Mammary epithelial cell (primary cell): ENCODE measurements at regions of chr2 and their contacts with region 1.

Region 1: DNA sequence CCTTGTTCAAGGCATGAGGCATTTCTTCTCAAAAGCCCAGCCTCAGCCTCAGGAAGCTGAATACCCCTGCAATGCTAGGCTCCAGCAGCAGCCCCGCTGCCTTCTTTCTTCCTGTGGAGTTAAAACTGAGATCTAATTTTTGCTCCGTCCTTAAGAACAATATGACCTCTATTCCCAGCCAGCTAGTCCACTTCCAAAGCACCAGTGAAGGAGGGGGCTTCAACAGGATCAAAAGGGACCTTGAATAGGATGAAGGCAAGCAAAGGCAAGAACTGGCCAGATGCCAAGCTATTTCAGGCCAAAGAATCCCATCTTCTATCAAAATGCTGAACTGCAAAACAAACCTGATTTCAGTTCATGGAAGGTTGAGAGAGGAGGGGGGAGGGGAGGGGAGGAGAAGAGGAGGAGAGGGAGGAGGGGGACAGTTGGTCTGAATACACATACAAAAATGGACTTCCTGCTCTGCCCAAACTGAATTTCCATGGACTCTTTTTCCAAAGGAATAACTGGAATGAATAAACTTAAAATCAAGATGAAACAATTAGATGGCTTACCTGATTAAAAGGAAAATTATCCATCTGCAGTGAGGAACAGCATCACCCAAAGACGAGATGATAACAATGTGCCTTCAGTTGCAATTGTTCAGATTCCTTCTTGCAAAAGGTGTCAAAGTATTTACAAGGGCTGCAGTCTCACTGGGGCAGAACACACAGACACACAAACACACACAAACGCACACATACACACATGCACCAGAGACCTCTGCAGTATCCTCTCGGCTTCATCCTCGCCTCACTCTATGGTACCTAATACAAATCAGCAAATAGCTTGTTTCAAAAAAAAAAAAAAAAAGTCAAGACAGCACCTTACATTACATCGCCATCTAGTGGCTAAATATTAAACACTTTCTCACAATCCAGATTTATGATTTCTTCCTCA is at the start of gene SCN1A:
- DNase-seq: peak; percentile 9
- H3K4me3 ChIP-seq: no peak within 1 kb of the TSS
- H3K27ac ChIP-seq: no peak within 1 kb of the TSS
- H3K4me1 ChIP-seq: peaks cover 7% of the 10 kb centered on the region
- H3K27me3 ChIP-seq: no peaks in the 10 kb centered on the region
- CTCF ChIP-seq: peak; percentile 40 to 55
- total RNA-seq, gene SCN1A: 0.50 TPM in 1 of 2 donors, not detected in the other

Region 2: DNA sequence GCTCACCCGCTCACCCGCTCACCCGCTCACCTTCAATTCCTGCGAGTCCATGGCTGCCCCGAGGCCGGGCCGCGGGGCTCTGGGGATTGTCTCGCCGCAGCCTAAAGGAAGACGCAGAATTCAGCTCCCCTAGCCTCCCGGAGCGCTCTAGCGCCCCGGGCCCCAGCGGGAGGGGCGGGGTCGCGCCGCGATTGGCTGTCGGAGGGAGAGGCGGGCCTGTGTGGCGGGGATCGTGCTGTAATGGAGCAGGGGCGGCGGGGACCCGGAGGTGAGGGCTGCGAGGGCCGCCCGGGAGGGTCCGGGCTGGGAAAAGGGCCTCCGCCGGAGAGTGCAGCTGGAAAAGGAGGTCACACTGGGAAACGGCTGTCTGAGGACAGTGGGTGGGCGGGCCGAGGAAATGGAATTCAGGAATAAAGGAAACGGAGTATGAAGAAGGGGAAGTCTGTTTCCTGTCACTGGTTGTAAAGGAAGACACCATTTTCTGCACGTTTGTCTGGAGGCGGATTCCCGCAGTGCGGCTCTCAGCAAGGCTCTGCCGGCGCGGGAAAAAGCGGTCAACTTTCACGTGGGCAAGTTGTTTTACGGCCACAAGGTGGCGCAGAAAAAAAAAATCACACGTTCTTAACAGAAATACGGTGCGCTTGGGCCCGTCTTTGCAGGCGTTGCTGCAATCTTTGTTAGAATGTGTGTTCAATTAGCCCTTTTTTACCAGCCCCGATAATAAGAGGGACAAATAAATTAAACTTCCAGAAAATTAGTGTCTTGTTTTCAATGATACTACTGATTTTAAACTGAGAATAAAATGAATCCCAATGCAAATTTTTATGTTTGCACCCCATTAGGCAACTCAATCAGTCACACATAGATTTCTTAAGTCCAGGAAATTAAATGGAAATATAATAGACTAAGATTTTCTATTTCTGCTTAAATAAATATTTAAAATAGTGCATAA is 173.6 kb before region 1 on chr2 and contains the start of gene TTC21B:
- CTCF ChIA-PET with region 1: interaction called, 6 read pairs
- dilution Hi-C with region 1: no loop called
- in situ Hi-C with region 1: loop called in 1 of 2 experiments (anchors 10 kb)
- intact Hi-C with region 1: loop called (anchors 1 kb)
- DNase-seq: peak; percentile 94
- H3K4me3 ChIP-seq: peak within 1 kb of the TSS; percentile 79 to 95 (median 84)
- H3K27ac ChIP-seq: peak within 1 kb of the TSS; percentile 85
- H3K4me1 ChIP-seq: peaks cover 5% of the 10 kb centered on the region
- H3K27me3 ChIP-seq: no peaks in the 10 kb centered on the region
- CTCF ChIP-seq: peak; percentile 68 to 71
- total RNA-seq, gene TTC21B: 9.3 to 20.7 TPM

Region 3: DNA sequence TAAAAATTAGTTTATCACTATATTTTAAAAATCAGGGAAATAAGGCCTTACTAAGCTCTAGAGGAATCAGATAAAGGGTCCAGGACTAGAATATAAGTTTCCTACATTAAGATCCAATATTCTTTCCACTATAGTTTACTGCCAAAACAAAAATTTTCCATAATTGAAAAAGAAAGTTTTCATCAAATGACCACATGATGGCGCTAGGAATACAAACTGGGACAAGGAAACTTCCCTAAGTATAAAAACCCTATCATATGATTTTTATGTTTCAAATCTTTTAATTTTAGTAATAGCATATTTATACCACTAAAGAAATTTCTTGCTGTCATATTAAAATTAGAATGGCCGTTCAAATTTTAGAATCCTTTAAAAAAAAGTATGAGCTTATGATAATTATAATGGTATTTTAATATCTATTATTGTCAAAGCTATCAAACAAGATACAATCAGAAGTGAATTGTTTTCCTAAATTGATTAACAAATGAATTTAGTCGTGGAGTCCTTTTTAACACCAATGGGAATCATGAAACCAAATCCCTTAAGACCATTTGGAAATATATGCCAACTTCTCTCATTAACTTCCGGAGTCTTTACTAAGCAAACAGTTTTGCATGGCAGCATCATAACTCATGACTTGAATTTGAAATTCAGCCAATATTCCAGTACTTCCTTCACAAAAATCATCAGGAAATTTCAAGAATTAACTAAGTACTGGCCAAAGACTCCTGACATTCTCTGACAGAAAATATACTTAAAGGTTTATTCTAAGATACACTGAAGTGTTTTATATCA is 69.9 kb before region 1 on chr2:
- CTCF ChIA-PET with region 1: no interaction called
- dilution Hi-C with region 1: no loop called
- in situ Hi-C with region 1: no loop called
- intact Hi-C with region 1: loop called (anchors 1 kb)
- DNase-seq: no peak
- H3K4me3 ChIP-seq: no peak overlapping the region
- H3K27ac ChIP-seq: no peak overlapping the region
- H3K4me1 ChIP-seq: no peaks in the 10 kb centered on the region
- H3K27me3 ChIP-seq: peaks cover 2% of the 10 kb centered on the region
- CTCF ChIP-seq: peak; percentile 45 to 55

Region 4: DNA sequence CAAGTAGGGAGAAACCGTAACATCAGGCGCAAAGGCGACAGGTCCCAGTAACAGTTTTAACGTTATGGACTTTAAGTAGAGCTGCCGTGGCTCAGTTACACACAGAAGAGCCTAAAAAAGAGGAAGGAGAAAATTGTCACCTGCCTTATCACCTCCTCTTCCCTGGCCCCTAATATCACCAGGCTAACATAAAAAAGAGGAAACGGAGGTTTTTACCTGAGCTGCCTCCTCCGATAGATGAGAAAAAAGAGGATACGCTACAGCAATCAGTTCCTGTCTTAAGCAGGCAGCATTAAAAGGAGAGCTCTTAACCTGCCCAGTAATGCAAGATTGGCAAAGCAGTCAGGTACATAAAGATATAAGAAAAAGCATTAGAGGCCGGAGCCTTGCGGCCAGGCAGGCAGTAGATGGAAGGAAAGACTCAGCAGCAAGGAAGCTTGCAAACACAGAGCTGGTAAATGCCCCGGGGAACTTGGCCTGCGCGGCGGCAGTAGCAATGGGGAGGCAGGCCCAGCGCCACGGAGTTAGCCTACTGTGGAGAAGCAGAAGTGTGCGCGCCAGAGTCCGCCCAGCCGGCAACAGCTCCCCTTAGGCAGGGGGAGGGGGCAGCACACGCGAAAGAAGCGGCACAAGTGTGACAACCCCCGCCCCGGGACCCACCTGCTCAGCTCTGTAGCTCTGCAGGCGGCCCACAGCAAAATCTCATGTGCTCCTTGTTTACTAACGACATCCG is 482.9 kb after region 1 on chr2:
- CTCF ChIA-PET with region 1: no interaction called
- dilution Hi-C with region 1: no loop called
- in situ Hi-C with region 1: no loop called
- intact Hi-C with region 1: no loop called
- DNase-seq: no peak
- H3K4me3 ChIP-seq: no peak overlapping the region
- H3K27ac ChIP-seq: no peak overlapping the region
- H3K4me1 ChIP-seq: no peaks in the 10 kb centered on the region
- H3K27me3 ChIP-seq: no peaks in the 10 kb centered on the region
- CTCF ChIP-seq: no peak